ENCODE measurements at regions of chr11 and their contacts with region 1.

Region 1: DNA sequence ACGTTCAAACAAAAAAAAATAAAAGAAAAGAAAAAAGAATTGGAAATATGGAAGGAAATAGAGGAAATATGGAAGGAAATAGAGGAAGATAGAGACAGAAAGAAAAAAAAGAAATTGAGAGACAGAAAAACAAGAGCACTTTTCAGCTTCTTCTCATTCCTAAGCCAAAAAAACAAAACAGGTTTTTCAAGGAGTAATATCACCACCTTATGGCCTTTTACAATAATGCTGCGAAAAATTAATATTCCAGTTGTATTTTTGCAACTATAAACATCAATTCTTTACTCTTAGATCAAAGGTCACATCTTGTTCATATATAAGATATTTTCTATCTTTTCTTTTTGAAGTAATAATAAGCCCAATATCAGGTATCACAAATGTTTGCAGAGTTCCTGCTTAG is 328.3 kb downstream of the FAT3 start:
- DNase-seq: no peak
- H3K4me3 ChIP-seq: no peak overlapping the region
- H3K27ac ChIP-seq: no peak overlapping the region
- H3K4me1 ChIP-seq: no peaks in the 10 kb centered on the region
- H3K27me3 ChIP-seq: no peaks in the 10 kb centered on the region
- CTCF ChIP-seq: no peak
- POLR2A ChIP-seq: no peak

Region 2: GRCh38 chr11:92500493-92500892 is 52.4 kb before region 1 on chr11:
- intact Hi-C with region 1: loop called (anchors 2 kb)
- DNase-seq: no peak
- H3K4me3 ChIP-seq: no peak overlapping the region
- H3K27ac ChIP-seq: no peak overlapping the region
- H3K4me1 ChIP-seq: no peaks in the 10 kb centered on the region
- H3K27me3 ChIP-seq: no peaks in the 10 kb centered on the region
- CTCF ChIP-seq: no peak
- POLR2A ChIP-seq: no peak

Measured in breast epithelium (tissue), 4 donors.